A673 (cell line): ENCODE measurements at regions of chr18 and their contacts with region 1.

Region 1: DNA sequence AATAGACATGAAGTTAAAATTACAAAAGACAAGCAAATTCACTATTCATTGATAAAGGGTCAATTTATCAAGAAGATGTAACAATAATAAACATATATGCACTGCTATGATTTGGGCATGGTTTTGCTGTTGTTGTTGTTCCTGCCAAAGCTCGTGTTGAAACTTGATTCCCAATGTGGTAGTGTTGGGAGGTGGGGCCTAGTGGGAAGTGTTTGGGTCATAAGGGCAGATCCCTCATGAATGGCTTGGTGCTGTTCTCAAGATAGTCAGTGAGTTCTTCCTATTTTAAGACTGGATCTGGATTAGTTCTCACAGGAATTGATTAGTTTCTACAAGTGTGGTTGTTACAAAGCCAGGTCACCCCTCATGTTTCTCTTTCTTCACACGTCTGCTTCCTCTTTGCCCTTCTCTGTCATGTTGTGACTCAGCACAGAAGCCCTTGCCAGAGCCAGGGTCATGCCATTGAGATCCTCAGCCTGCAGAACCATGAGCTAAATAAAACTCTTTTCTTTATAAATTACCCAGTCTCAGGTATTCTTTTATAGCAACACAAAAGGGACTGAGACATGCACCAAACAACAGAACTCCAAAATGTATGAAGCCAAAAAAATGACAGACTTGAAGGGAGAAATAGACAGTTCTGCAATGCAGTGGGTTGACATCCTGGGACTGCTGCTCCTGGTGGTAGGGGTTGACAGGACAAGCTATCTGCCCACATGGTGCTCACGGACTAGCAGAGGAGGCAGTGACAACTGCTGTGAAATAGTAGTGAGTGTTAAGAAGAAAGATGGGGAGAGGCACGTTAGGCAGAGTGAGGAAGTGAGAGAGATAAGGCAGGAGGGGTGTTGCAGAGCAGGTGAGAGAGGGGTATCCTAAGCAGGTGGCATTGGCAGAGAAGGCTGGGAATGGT is 18.6 kb upstream of the SKA1 start:
- DNase-seq: no peak
- H3K4me3 ChIP-seq: no peak overlapping the region
- H3K27ac ChIP-seq: no peak overlapping the region
- H3K4me1 ChIP-seq: no peaks in the 10 kb centered on the region
- H3K27me3 ChIP-seq: peaks cover 40% of the 10 kb centered on the region
- CTCF ChIP-seq: no peak

Region 2: DNA sequence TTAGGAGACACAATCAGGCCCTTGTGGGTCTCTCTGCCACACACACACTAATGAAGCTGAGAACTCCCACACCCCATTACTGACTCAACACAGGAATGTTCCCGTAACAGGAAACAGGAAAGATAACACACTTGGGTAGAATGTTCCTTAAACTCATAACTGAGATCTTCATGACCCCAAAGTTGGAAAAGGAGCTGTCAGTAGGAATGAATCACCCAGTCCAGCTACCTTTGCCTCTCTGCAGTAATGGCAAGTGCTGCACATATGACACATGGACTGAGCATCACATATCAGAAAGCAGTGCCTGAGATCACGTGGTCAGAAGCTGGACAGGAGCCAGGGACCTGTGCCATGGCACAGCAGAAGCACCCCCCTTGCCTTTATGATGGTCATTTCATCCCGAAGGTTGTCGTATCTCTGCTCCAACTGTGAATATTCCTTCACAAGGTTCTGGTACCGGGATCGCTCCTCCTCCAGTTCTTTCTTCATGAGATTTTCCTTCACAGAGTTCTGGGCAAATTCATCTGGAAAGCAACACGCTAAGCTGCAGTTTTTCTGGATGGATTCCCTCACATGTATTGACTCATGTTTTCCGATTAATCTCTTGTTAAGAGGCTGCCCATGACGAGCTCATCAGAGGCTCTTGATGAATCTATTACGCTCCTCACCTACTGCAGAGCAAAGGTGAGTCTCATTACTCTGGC is 477.6 kb before region 1 on chr18:
- CTCF ChIA-PET with region 1: no interaction called
- POLR2A ChIA-PET with region 1: no interaction called
- intact Hi-C with region 1: loop called (anchors 10 kb)
- DNase-seq: no peak
- H3K4me3 ChIP-seq: no peak overlapping the region
- H3K27ac ChIP-seq: no peak overlapping the region
- H3K4me1 ChIP-seq: no peaks in the 10 kb centered on the region
- H3K27me3 ChIP-seq: peaks cover 46% of the 10 kb centered on the region
- CTCF ChIP-seq: no peak

Region 3: DNA sequence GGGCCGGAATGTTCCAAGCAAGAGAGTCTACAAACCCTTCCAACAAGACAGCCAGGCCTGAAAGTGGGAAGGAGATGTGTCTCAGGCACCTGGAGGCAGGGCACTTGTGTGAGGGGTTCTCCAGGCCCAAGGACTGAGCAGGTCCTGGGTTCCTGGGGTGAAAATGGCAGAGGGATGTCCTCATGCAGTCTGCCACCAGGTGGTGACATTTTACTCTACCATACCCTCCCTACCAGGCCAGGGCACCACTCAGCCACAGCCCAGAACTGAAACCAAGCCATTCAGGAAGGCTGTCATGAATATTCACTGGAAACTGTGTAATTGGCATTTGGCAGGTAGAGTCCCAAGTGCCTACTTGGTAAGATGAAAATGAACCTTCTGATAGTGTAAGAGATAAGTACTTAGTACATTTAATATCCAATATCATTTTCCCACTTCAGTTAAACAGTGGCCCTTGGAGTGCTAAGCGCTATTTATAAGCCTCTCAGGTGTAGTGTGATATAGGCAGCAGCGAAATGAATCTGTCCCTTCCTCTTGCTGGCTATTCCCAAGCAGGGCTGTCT is 346.4 kb before region 1 on chr18:
- CTCF ChIA-PET with region 1: no interaction called
- POLR2A ChIA-PET with region 1: no interaction called
- intact Hi-C with region 1: loop called (anchors 10 kb)
- DNase-seq: peak; percentile 59
- H3K4me3 ChIP-seq: no peak overlapping the region
- H3K27ac ChIP-seq: no peak overlapping the region
- H3K4me1 ChIP-seq: no peaks in the 10 kb centered on the region
- H3K27me3 ChIP-seq: peaks cover 25% of the 10 kb centered on the region
- CTCF ChIP-seq: peak; percentile 68

Region 4: GRCh38 chr18:50218432-50219197 is 137.7 kb before region 1 on chr18:
- CTCF ChIA-PET with region 1: interaction called, 14 read pairs
- POLR2A ChIA-PET with region 1: no interaction called
- intact Hi-C with region 1: loop called (anchors 5 kb)
- DNase-seq: peak; percentile 20
- H3K4me3 ChIP-seq: no peak overlapping the region
- H3K27ac ChIP-seq: no peak overlapping the region
- H3K4me1 ChIP-seq: no peaks in the 10 kb centered on the region
- H3K27me3 ChIP-seq: peaks cover 21% of the 10 kb centered on the region
- CTCF ChIP-seq: peak; percentile 55

Region 5: GRCh38 chr18:50590593-50590992 is 234.3 kb after region 1 on chr18:
- CTCF ChIA-PET with region 1: no interaction called
- POLR2A ChIA-PET with region 1: no interaction called
- intact Hi-C with region 1: no loop called
- DNase-seq: no peak
- H3K4me3 ChIP-seq: no peak overlapping the region
- H3K27ac ChIP-seq: no peak overlapping the region
- H3K4me1 ChIP-seq: no peaks in the 10 kb centered on the region
- H3K27me3 ChIP-seq: no peaks in the 10 kb centered on the region
- CTCF ChIP-seq: no peak

Region 6: GRCh38 chr18:50638884-50639420 is 282.7 kb after region 1 on chr18:
- CTCF ChIA-PET with region 1: no interaction called
- POLR2A ChIA-PET with region 1: no interaction called
- intact Hi-C with region 1: no loop called
- DNase-seq: no peak
- H3K4me3 ChIP-seq: no peak overlapping the region
- H3K27ac ChIP-seq: no peak overlapping the region
- H3K4me1 ChIP-seq: no peaks in the 10 kb centered on the region
- H3K27me3 ChIP-seq: no peaks in the 10 kb centered on the region
- CTCF ChIP-seq: no peak